Gastrocnemius medialis (tissue), 4 donors: ENCODE measurements at regions of chr1 and their contacts with region 1.

Region 1: GRCh38 chr1:218345673-218346390 is 696 bp downstream of the TGFB2 start:
- DNase-seq: peak; percentile 49 to 72
- ATAC-seq: peak; percentile 46 to 52
- H3K4me3 ChIP-seq: peak overlapping the region; percentile 66 to 86 (median 70)
- H3K27ac ChIP-seq: peak overlapping the region; percentile 90 to 94 (median 92)
- H3K4me1 ChIP-seq: peaks cover 27 to 30% of the 10 kb centered on the region in 2 donors
- H3K27me3 ChIP-seq: no peaks in the 10 kb centered on the region
- CTCF ChIP-seq: peak in 1 of 5 experiments; percentile 15
- POLR2A ChIP-seq: peak in 1 of 2 donors; percentile 6

Region 2: DNA sequence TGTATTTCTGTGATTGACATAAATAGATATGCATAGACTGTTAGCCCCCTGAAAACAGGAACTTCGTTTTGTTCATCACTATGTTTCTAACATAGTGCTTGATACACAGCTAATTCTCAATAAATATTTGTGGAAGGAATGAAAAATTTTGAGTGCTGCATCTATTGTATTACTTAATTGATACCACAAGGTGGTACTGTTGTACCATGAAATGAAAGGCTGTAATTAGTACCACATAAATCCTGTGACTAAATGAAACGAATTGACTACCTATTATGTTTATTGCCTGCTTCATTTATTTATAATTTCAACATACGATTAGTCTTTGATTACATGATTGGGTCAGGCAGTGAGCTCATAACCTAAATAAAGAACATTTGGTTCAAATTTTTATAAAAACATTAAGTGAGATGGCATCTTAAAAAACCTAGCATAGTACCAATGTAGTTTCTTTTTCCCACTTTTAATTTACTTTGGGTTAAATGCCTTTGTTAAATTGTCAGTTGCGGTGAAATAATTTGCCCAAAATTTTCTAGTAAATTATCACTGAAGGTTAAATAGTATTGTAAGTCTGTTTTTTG is 15.7 kb before region 1 on chr1:
- in situ Hi-C with region 1: no loop called
- intact Hi-C with region 1: no loop called
- DNase-seq: no peak
- ATAC-seq: no peak
- H3K4me3 ChIP-seq: no peak overlapping the region
- H3K27ac ChIP-seq: no peak overlapping the region
- H3K4me1 ChIP-seq: peaks cover 0 to 3% of the 10 kb centered on the region in 2 donors
- H3K27me3 ChIP-seq: no peaks in the 10 kb centered on the region
- CTCF ChIP-seq: peak; percentile 65 to 77 (median 68)
- POLR2A ChIP-seq: no peak

Region 3: DNA sequence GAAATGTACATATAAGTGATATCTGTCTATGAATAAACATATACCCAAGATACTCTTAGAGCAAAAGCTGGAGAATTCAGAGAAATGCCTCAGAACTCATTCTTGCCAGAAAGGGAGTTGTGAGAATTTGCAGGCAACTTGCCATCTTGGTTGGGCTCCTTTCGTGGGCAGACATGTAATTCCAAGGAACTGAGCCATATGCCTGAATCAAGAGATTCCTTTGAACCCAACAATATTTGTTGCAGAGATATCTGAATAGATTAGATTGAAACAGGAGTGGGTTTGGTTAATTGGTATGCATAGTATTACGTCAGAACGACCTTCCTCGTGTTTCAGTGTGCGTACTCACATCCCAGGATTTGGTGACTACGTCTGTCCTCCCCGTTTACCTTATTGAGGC is 66.3 kb after region 1 on chr1:
- in situ Hi-C with region 1: no loop called
- intact Hi-C with region 1: loop called (anchors 5 kb)
- DNase-seq: no peak
- ATAC-seq: no peak
- H3K4me3 ChIP-seq: no peak overlapping the region
- H3K27ac ChIP-seq: peak overlapping the region in 3 of 4 donors; percentile 25 to 77 (median 68)
- H3K4me1 ChIP-seq: peaks cover 38 to 54% of the 10 kb centered on the region in 2 donors
- H3K27me3 ChIP-seq: no peaks in the 10 kb centered on the region
- CTCF ChIP-seq: no peak
- POLR2A ChIP-seq: no peak

Region 4: GRCh38 chr1:218521375-218522169 is 175.7 kb after region 1 on chr1:
- in situ Hi-C with region 1: loop called in 2 of 4 experiments (anchors 5 to 10 kb)
- intact Hi-C with region 1: no loop called
- DNase-seq: peak; percentile 21 to 56
- ATAC-seq: peak; percentile 39 to 94
- H3K4me3 ChIP-seq: no peak overlapping the region
- H3K27ac ChIP-seq: no peak overlapping the region
- H3K4me1 ChIP-seq: peaks cover 5 to 18% of the 10 kb centered on the region in 2 donors
- H3K27me3 ChIP-seq: no peaks in the 10 kb centered on the region
- CTCF ChIP-seq: peak; percentile 63 to 80 (median 76)
- POLR2A ChIP-seq: no peak

Region 5: GRCh38 chr1:218665221-218665620 is 319.4 kb after region 1 on chr1:
- in situ Hi-C with region 1: no loop called
- intact Hi-C with region 1: loop called (anchors 10 kb)
- DNase-seq: peak; percentile 81 to 82
- ATAC-seq: peak; percentile 97 to 98
- H3K4me3 ChIP-seq: peak overlapping the region in 3 of 4 donors; percentile 8 to 36 (median 33)
- H3K27ac ChIP-seq: peak overlapping the region; percentile 63 to 85 (median 77)
- H3K4me1 ChIP-seq: peaks cover 3 to 20% of the 10 kb centered on the region in 2 donors
- H3K27me3 ChIP-seq: no peaks in the 10 kb centered on the region
- CTCF ChIP-seq: no peak
- POLR2A ChIP-seq: no peak

Region 6: DNA sequence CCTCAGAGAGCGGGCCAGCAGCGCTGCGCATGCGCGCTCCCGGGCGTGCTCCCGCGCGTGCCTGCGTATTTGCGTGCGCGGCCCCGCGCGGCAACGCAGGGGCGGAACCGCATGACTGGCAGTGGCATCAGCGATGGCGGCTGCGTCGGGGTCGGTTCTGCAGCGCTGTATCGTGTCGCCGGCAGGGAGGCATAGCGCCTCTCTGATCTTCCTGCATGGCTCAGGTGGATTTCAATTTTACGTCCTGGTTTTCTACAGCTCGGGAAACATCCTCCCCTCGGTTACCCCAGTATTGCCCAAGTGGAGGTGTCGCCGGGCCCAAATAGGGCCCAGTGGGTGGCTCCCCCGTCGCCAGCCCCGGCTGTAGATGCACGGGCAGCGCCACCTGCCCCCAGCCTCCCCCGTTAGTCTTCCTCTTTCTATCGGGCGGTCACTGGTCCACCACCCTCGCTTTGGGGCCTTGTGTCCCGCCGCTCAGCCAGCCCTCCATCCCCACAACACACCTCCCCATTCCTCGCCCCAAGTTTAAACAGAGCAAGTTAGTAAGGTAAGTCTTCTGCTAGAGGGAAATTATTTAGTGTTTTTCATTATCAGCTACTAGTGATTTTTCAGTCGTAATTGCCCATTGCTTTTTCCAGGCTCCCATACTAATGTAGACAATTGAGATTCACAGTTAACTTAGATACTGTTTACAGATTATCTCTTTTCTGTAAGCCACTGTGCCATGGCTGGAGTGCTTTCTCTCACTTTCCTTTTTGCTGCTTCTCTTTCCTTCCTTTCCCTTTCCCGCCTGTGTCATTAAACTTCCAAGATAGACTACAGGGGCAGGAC is 828.1 kb after region 1 on chr1 and contains the start of gene LYPLAL1:
- in situ Hi-C with region 1: no loop called
- intact Hi-C with region 1: loop called (anchors 5 kb)
- DNase-seq: peak; percentile 76 to 84
- ATAC-seq: peak; percentile 82 to 87
- H3K4me3 ChIP-seq: peak within 1 kb of the TSS; percentile 69 to 87 (median 76)
- H3K27ac ChIP-seq: peak within 1 kb of the TSS; percentile 92 to 96 (median 94)
- H3K4me1 ChIP-seq: peaks cover 36 to 45% of the 10 kb centered on the region in 2 donors
- H3K27me3 ChIP-seq: no peaks in the 10 kb centered on the region
- CTCF ChIP-seq: peak in 1 of 5 experiments; percentile 18
- POLR2A ChIP-seq: peak; percentile 88 to 89
- total RNA-seq, gene LYPLAL1: 12.6 to 18.9 (median 15.4) TPM

Region 7: GRCh38 chr1:219660666-219661463 is 1315.0 kb after region 1 on chr1:
- in situ Hi-C with region 1: loop called (anchors 25 kb)
- intact Hi-C with region 1: no loop called
- DNase-seq: peak; percentile 64 to 78
- ATAC-seq: peak; percentile 83 to 87
- H3K4me3 ChIP-seq: peak overlapping the region in 3 of 4 donors; percentile 0 to 32 (median 19)
- H3K27ac ChIP-seq: no peak overlapping the region
- H3K4me1 ChIP-seq: peaks cover 0 to 5% of the 10 kb centered on the region in 2 donors
- H3K27me3 ChIP-seq: no peaks in the 10 kb centered on the region
- CTCF ChIP-seq: peak in 4 of 5 experiments; percentile 26 to 71 (median 52)
- POLR2A ChIP-seq: no peak